Activated naive CD4-positive, alpha-beta T cell treated with anti-CD3 and anti-CD28 coated beads for 36 hours (primary cell): ENCODE measurements at regions of chr9 and their contacts with region 1.

Region 1: DNA sequence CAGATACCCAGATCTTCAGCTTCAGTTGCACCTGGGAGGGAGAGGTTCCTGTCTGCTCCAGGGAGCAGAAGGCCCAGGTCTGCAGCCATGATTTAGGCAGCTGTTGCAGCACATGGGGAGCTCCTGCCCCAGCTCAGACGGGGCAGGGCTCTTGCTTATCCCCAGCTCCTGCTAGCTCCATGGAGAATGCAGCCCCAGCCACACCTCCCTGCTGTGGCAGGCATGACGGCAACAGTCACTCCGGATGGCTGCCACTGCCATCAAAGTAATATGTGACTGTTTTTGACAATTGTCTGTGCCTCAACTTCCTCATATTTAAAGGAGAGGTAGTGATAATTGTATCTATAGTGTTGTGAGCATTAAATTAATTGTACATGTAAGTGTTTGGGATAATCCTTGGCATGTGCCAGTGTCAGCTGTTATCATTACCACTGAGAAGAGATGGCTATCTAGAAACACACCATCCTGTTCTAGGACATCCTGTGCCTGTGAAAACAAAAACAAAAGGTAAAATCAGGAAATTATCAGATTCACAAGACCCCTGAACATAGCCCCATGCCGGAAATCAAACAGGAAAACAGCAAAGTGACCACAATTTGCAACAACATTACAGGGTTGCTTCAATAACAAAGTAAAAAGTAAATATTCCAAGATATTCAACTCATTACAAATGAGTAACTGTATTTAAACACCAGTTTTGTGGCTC is 1048.8 kb upstream of the ACO1 start:
- DNase-seq: no peak
- H3K4me3 Mint-ChIP-seq: no peak overlapping the region
- H3K27ac Mint-ChIP-seq: peak overlapping the region; percentile 37
- H3K4me1 Mint-ChIP-seq: peaks cover 20% of the 10 kb centered on the region
- H3K27me3 Mint-ChIP-seq: no peaks in the 10 kb centered on the region

Region 2: GRCh38 chr9:31259824-31260223 is 75.9 kb before region 1 on chr9:
- CTCF ChIA-PET with region 1: no interaction called
- intact Hi-C with region 1: loop called (anchors 5 kb)
- DNase-seq: peak; percentile 25
- H3K4me3 Mint-ChIP-seq: peak overlapping the region; percentile 17
- H3K27ac Mint-ChIP-seq: peak overlapping the region; percentile 71
- H3K4me1 Mint-ChIP-seq: peaks cover 18% of the 10 kb centered on the region
- H3K27me3 Mint-ChIP-seq: no peaks in the 10 kb centered on the region